ENCODE measurements at regions of chr6 and their contacts with region 1.

Region 1: DNA sequence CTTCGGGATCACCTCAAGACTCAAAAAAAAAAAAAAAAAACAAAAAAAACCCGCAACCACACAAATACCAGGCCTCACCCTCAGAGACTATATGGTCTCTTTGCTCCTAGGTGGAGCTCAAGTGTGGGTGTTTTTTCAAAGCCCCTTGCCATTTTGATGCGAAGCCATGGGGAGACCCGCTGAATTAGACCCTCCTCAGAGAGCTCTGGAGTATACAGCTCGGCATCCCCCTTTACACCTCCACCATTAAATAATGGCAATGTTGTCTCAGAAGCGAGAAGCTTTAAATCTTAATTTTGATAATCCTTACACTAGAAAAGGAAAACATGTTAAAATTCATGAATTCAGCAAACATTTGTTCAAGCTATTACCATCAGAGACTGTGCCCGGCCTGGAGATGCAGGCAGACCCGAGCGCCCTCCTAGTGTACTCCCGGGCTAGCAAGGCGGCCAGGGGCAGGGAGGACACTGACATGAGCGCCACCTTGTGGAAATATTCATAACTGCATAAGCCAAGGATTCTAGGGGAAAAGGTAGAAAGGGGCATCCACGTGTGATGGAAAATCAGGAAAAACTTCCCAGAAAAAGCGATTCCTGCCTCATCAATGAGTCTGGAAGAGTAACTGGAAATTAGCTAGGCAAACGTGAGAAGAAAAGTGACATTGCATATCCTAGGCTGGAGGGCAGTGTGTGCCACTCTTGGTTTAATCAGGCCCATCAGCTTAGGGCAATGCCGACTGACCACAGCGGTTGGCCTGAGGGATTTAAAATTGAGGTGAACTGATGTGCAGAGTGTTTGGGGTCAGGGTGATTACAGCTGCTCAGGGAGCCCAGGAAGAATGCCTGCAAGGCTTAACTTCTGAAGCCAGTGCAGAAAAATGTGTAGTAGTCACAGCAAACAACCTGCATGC is 72.5 kb downstream of the B3GAT2 start:
- DNase-seq: peak; percentile 59 to 67 (median 60)
- ATAC-seq: peak; percentile 94 to 99 (median 96)
- H3K4me3 ChIP-seq: no peak overlapping the region
- H3K27ac ChIP-seq: no peak overlapping the region
- H3K4me1 ChIP-seq: no peaks in the 10 kb centered on the region
- H3K27me3 ChIP-seq: no peaks in the 10 kb centered on the region
- CTCF ChIP-seq: peak; percentile 86 to 95 (median 92)
- POLR2A ChIP-seq: no peak

Region 2: DNA sequence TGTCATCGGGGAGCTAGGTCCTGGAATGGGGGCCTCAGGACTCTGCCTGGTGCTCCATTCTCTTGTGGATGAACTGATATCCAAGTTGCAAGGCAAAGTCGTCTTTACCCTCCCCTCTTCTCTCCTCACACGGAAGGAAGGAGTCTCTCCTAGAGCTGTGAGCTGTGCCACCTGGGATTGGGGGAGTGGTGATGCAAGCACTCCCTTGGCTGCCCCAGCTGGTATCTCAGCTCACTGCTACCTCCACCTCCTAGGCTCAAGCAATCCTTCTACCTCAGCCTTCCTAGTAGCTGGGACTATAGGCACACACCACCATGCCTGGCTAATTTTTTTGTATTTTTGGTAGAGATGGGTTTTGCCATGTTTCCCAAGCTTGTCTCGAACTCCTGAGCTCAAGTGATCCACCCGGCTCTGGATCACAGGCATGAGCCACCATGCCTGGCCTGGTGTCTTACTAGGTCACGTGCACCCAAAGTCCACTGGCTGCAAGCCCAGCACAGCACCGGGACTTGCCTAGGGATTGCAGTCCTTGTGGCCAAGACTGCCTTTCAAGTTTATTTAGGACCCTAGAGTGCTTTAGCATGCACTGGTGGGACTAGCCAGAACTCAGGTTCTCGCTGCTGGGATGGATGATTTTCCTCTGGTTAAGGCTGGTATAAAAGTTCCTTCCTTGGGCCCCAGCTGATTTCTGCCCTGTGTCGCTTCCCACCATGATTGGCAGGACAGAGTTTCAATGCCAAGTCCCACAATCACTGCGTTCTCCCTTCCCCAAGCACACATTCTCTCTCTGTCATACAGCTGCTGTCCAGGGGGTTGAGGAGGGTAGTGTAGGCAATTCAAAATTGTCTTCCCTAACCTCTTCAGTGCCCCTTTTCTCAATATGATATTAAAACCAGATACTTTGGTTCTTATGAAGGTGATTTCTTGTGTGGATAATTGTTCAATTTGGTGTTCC is 183.1 kb before region 1 on chr6:
- intact Hi-C with region 1: loop called (anchors 5 to 10 kb)
- DNase-seq: peak; percentile 39 to 79 (median 65)
- ATAC-seq: peak; percentile 78 to 94 (median 83)
- H3K4me3 ChIP-seq: no peak overlapping the region
- H3K27ac ChIP-seq: no peak overlapping the region
- H3K4me1 ChIP-seq: peaks cover 0 to 12% (median 5%) of the 10 kb centered on the region in 4 donors
- H3K27me3 ChIP-seq: no peaks in the 10 kb centered on the region
- CTCF ChIP-seq: no peak
- POLR2A ChIP-seq: no peak

Region 3: GRCh38 chr6:70706491-70707123 is 177.7 kb before region 1 on chr6:
- intact Hi-C with region 1: loop called (anchors 5 to 10 kb)
- DNase-seq: no peak
- ATAC-seq: peak in 3 of 4 donors; percentile 50 to 65 (median 62)
- H3K4me3 ChIP-seq: no peak overlapping the region
- H3K27ac ChIP-seq: no peak overlapping the region
- H3K4me1 ChIP-seq: peaks cover 0 to 3% (median 1%) of the 10 kb centered on the region in 4 donors
- H3K27me3 ChIP-seq: no peaks in the 10 kb centered on the region
- CTCF ChIP-seq: peak; percentile 59 to 71 (median 66)
- POLR2A ChIP-seq: no peak

Region 4: DNA sequence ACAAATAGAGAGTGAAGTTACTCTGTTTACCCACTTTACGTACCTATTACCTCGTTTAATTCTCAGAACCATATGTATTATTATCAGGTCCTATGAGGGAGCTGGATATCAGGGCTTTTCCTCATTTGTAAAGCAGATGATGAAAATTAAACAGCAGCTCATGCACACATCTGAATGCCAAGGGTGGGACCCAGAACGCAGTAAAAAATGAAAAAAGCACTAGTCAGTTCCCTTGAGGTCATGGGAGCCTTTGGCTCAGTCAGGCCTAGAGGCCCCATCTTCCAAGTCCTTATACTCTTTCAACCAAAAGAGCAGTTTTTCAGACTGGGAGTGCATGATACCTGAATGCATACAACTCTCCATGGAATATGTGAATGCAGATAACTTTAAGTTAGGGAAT is 49.5 kb after region 1 on chr6:
- intact Hi-C with region 1: no loop called
- DNase-seq: no peak
- ATAC-seq: no peak
- H3K4me3 ChIP-seq: no peak overlapping the region
- H3K27ac ChIP-seq: no peak overlapping the region
- H3K4me1 ChIP-seq: no peaks in the 10 kb centered on the region
- H3K27me3 ChIP-seq: no peaks in the 10 kb centered on the region
- CTCF ChIP-seq: no peak
- POLR2A ChIP-seq: no peak

Region 5: DNA sequence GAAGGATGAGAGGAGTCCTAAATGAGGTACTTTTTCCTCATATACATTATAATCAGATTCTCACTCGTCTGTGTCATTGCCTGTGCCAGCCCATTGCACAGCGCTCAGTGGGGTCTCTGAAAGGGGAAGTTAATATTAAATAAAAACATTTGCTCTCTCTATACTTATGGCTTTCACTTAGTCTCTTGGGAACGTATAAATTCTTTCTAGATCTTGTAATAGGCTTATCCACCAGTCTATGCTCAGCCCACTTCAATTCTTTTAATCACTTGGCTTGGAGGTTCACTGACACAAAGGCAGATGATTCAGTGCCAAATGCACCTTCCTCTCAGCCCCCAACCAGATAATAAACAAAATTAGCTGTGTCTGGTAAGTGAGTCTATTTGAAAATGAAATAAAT is 240.0 kb after region 1 on chr6:
- intact Hi-C with region 1: no loop called
- DNase-seq: no peak
- ATAC-seq: no peak
- H3K4me3 ChIP-seq: no peak overlapping the region
- H3K27ac ChIP-seq: no peak overlapping the region
- H3K4me1 ChIP-seq: no peaks in the 10 kb centered on the region
- H3K27me3 ChIP-seq: no peaks in the 10 kb centered on the region
- CTCF ChIP-seq: no peak
- POLR2A ChIP-seq: no peak